Activated naive CD4-positive, alpha-beta T cell treated with anti-CD3 and anti-CD28 coated beads, Interleukin-2, amount 10 ng/mL, durations not matched to agents 7 days and 5 days (primary cell): ENCODE measurements at regions of chr4 and their contacts with region 1.

Region 1: GRCh38 chr4:81471588-81472288 is at the start of gene RASGEF1B:
- DNase-seq: peak; percentile 92
- H3K4me3 Mint-ChIP-seq: peak within 1 kb of the TSS; percentile 81
- H3K27ac Mint-ChIP-seq: peak within 1 kb of the TSS; percentile 92
- H3K4me1 Mint-ChIP-seq: peaks cover 29% of the 10 kb centered on the region
- H3K27me3 Mint-ChIP-seq: peaks cover 15% of the 10 kb centered on the region

Region 2: DNA sequence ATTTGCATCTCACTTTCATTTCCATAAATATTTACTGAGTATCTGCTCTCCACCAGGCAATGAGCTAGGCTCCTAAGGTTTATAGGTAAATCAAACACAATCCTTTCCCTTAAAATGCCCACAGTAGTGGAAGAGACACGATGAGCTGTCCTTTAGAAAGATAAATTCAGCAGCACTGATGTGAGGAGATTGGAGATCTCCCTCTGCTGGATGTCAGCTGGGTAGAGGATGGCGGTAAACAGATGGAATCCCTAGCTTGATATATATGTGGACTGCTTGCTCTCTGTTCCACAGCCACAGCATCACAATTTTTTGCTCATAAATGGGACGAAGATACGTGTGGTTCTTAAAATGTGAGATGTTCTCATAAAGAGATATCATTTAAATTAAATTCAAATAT is 216.3 kb after region 1 on chr4:
- CTCF ChIA-PET with region 1: interaction called, 21 read pairs
- DNase-seq: no peak
- H3K4me3 Mint-ChIP-seq: no peak overlapping the region
- H3K27ac Mint-ChIP-seq: no peak overlapping the region
- H3K4me1 Mint-ChIP-seq: no peaks in the 10 kb centered on the region
- H3K27me3 Mint-ChIP-seq: no peaks in the 10 kb centered on the region

Region 3: GRCh38 chr4:81844717-81845116 is 373.0 kb after region 1 on chr4:
- CTCF ChIA-PET with region 1: interaction called, 74 read pairs
- DNase-seq: peak; percentile 82
- H3K4me3 Mint-ChIP-seq: no peak overlapping the region
- H3K27ac Mint-ChIP-seq: no peak overlapping the region
- H3K4me1 Mint-ChIP-seq: no peaks in the 10 kb centered on the region
- H3K27me3 Mint-ChIP-seq: no peaks in the 10 kb centered on the region